Left ventricle myocardium inferior (tissue), 1 donor: ENCODE measurements at regions of chr5 and their contacts with region 1.

Region 1: DNA sequence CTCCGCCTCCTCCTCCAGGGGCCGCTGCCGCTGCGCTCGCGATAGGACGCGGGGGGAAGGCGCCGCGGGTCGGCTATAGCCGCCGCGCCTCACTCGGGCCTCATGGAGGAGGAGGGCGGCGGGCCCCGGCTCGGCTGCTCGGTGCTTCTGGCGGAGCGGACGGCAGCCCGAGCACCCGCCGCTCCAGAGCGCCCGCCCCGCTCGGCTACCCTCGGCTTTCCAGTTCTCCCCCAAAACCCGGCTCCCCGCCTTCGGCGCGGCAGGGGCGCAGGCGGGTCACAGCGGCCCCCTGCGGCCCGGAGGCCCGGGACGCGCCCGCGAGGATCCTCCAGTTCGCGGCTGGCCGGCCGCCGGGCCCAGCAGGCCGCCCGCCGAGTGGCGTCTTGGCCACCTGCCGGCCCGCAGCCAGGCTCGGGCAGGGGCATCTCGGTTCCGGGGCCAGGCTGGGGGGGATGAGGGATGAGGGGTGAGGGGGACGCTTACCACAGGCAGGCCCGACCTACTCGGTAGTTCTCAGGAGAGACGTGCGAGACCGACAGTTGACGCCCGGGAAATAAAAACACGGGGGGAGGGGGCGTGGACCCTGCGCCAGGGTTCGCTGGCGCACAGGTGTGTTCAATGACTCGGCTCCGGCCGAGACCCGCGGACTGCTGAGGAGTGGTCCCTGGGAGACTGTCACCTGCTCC is at the start of gene PAIP1:
- DNase-seq: peak; percentile 85
- H3K4me3 ChIP-seq: peak within 1 kb of the TSS; percentile 85
- H3K27ac ChIP-seq: peak within 1 kb of the TSS; percentile 98
- H3K4me1 ChIP-seq: peaks cover 56% of the 10 kb centered on the region
- H3K27me3 ChIP-seq: no peaks in the 10 kb centered on the region
- CTCF ChIP-seq: peak; percentile 82
- total RNA-seq, gene PAIP1: 129 TPM

Region 2: DNA sequence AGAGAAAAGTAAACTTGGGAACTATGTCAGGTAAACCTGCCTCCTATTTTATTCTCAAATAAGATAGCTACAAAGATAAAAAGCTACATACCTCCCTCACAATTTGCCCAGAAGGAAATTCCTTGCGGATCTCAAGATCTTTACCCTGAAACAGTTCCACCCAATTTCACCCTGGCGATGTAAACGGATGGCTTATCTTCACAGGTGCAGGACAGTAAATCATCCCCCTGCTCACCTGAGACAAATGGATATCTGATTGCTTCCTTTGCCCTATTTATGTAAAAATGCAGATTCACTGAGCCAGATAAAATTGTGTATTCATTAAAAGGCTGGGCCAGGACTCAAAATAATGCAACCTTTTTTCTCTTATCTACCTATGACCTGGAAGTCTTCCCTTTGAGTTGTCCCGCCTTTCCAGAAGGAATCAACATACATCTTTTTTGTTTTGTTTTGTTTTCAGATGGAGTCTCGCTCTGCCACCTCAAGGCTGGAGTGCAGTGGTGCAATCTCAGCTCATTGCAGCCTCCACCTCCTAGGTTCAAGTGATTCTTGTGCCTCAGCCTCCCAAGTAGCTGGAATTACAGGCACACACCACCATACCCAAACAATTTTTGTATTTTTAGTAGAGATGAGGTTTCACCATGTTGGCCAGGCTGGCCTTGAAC is 87.2 kb before region 1 on chr5:
- intact Hi-C with region 1: no loop called
- DNase-seq: no peak
- H3K4me3 ChIP-seq: no peak overlapping the region
- H3K27ac ChIP-seq: no peak overlapping the region
- H3K4me1 ChIP-seq: no peaks in the 10 kb centered on the region
- H3K27me3 ChIP-seq: no peaks in the 10 kb centered on the region
- CTCF ChIP-seq: no peak

Region 3: GRCh38 chr5:43602461-43603343 is 45.7 kb after region 1 on chr5 and contains the start of gene NNT:
- intact Hi-C with region 1: loop called (anchors 10 kb)
- DNase-seq: peak; percentile 87
- H3K4me3 ChIP-seq: peak within 1 kb of the TSS; percentile 87
- H3K27ac ChIP-seq: peak within 1 kb of the TSS; percentile 97
- H3K4me1 ChIP-seq: peaks cover 76% of the 10 kb centered on the region
- H3K27me3 ChIP-seq: no peaks in the 10 kb centered on the region
- CTCF ChIP-seq: no peak
- total RNA-seq, gene NNT: 656 TPM